Heart right ventricle (tissue), 16 donors: ENCODE measurements at regions of chr18 and their contacts with region 1.

Region 1: DNA sequence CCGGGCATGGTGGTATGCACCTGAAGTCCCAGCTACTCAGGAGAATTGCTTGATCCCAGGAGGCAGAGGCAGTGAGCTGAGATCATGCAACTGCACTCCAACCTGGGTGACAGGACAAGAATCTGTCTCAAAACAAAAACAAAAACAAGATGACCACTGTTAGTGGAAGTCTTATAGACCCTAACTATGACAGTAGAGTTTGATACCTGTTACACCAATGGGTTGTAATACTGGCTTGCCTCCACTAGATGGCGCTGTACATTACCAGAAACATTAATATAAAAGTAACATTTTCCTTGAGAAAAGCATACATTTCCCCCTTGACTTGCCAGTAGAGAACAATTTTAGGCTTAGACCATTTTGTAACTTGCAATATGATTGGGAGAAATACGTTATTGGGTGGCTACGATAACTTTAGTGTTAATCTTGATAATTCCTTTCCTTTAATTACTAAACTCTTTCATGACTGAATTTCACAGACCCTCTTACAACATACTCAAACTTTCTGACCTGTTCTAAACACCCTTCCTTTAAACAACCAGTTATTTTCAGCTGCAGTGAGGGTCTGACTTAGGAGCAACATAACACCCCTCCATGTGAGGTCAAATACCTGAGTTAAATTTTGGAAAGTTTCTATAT is 19.5 kb downstream of the SLC25A52 start:
- DNase-seq: peak in 1 of 2 donors; percentile 20
- ATAC-seq: peak in 1 of 8 donors; percentile 42
- H3K4me3 ChIP-seq: no peak overlapping the region
- H3K27ac ChIP-seq: no peak overlapping the region
- H3K4me1 ChIP-seq: no peaks in the 10 kb centered on the region
- H3K27me3 ChIP-seq: no peaks in the 10 kb centered on the region
- CTCF ChIP-seq: peak; percentile 81 to 94 (median 91)

Region 2: DNA sequence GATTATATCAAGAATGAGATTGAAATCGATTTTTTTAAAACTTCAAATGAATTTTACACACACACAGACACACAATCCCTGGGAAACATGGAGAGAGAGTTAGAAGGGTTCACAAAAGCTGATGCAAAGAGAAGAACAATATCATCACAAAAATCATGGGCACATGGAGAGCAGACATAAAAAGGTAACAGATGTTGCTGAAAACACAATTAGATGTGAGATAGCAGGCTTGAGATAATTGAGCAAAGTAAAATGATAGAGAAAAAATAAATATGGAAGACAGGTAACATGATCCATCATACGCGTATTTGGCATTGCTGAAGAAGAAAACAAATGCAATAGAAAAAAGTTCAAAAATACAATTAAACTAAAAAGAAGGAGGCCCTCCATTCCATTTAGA is 45.2 kb before region 1 on chr18:
- intact Hi-C with region 1: no loop called
- DNase-seq: no peak
- ATAC-seq: no peak
- H3K4me3 ChIP-seq: no peak overlapping the region
- H3K27ac ChIP-seq: no peak overlapping the region
- H3K4me1 ChIP-seq: no peaks in the 10 kb centered on the region
- H3K27me3 ChIP-seq: no peaks in the 10 kb centered on the region
- CTCF ChIP-seq: no peak

Region 3: DNA sequence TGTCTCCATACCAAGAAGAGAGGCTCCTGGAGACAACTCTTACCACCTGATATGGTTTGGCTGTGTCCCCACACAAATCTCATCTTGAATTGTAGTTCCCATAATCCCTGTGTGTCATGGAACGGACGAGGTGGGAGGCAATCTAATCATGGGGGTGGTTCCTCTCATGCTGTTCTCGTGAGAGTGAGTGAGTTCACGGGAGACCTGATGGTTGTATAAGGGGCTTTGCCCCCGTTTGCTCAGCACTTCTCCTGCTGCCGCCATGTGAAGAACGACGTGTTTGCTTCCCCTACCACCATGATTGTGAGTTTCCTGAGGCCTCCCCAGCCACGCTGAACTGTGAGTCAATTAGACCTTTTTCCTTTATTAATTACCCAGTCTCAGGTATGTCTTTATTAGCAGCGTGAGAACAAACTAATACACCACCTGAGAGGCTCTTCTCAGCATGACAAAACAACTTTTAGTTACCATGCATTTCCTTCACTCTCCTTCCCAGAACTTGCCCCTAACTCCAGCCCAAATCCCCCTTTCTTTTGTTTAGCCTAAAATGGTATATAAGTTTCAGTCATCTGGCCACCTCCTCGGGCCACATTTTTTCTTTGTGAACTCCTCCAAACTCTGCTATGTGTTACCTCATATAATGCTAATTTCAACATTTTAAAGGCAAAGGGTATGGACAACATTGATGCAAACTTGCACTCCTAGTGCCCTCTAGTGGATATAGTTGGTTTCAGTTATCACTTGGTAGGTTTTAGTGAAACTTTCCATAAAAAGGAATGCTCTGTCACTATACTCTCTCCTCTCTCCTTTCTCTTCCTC is 78.1 kb after region 1 on chr18:
- intact Hi-C with region 1: loop called in 7 of 10 experiments (anchors 2 to 5 kb)
- DNase-seq: no peak
- ATAC-seq: peak in 3 of 8 donors; percentile 44 to 69 (median 46)
- H3K4me3 ChIP-seq: no peak overlapping the region
- H3K27ac ChIP-seq: no peak overlapping the region
- H3K4me1 ChIP-seq: peaks cover 0 to 9% (median 0%) of the 10 kb centered on the region in 9 donors
- H3K27me3 ChIP-seq: no peaks in the 10 kb centered on the region
- CTCF ChIP-seq: peak; percentile 34 to 78 (median 73)

Region 4: DNA sequence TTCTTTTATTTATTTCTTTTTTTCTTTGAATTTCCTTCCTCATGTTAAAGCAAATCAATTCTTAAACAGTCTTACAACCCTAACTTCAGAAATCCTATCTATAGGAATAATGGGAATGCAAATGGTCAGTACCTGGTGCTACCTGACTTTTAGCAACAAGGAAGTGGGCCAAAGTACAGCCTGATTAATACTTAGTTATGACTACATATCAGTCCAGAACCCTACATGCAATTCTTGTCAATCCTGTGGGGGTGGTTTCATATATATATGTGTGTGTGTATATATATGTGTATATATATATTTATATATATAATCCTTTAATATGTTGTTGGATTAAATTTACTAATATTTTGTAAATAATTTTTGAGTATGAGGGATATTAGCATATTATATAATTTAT is 216.5 kb after region 1 on chr18:
- intact Hi-C with region 1: loop called in 1 of 10 experiments (anchors 5 kb)
- DNase-seq: no peak
- ATAC-seq: no peak
- H3K4me3 ChIP-seq: no peak overlapping the region
- H3K27ac ChIP-seq: no peak overlapping the region
- H3K4me1 ChIP-seq: no peaks in the 10 kb centered on the region
- H3K27me3 ChIP-seq: no peaks in the 10 kb centered on the region
- CTCF ChIP-seq: no peak

Region 5: GRCh38 chr18:31977270-31977872 is 236.2 kb after region 1 on chr18:
- intact Hi-C with region 1: loop called in 9 of 10 experiments (anchors 2 to 10 kb)
- DNase-seq: peak in 1 of 2 donors; percentile 58
- ATAC-seq: peak in 5 of 8 donors; percentile 44 to 73 (median 59)
- H3K4me3 ChIP-seq: no peak overlapping the region
- H3K27ac ChIP-seq: no peak overlapping the region
- H3K4me1 ChIP-seq: peaks cover 0 to 5% (median 0%) of the 10 kb centered on the region in 9 donors
- H3K27me3 ChIP-seq: no peaks in the 10 kb centered on the region
- CTCF ChIP-seq: peak; percentile 63 to 81 (median 69)